Heart left ventricle (tissue), 16 donors: ENCODE measurements at regions of chr13 and their contacts with region 1.

Region 1: DNA sequence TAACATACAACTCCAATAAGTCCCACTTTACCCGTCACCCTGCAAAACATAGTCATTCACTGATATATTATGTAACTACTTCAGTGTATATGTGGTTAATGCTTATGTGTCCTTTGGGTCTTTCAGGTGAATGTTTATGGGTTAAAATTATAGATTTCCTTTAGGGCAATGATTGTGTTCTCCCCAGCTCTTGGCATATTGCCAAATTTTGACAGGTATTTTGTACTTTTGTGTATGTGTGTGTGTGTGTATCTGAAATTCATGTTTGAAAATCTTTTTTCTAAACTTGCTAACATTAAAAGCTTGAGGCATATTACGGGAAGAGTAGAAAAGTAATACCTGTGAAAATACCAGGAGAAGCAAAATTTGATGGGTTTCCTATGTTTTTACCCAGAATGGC is 8.2 kb downstream of the CDK8 start:
- DNase-seq: no peak
- ATAC-seq: no peak
- H3K4me3 ChIP-seq: no peak overlapping the region
- H3K27ac ChIP-seq: no peak overlapping the region
- H3K4me1 ChIP-seq: peaks cover 0 to 30% (median 12%) of the 10 kb centered on the region in 12 donors
- H3K27me3 ChIP-seq: no peaks in the 10 kb centered on the region
- CTCF ChIP-seq: no peak
- POLR2A ChIP-seq: no peak

Region 2: DNA sequence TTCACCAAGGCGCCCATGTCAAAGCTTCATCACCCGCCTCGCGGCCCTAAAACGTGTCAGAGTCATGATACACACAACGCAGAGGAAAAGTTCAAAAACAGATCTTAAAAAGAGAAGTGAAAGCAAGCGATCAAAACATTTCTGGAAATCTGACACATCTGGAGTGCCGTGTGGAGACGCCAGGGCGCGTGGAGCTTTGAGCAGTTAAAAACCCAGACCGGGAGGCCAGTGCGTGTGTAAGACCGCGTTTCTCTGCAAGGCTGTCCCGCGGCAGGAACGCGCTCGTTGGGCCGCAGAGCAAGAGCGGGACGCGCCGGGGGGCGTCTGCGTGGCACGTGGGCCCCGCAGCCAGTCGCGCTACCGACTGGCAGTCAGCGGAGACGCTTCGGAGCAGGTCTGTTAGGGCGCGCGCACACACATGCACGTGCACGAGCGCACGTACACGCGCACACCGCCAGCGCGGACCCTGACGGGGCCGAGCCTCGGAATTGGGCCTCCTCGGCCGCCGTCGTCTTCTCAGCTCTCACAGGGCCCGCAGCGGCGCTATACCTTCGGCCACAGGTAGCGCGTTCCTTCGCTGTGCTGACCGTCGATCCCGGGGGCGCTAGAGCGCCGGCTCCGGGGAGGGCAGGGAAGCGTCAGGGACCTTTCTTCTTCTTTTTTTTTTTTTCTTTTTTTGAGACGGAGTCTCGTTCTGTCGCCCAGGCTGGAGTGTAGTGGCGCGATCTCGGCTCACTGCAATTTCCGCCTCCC is 75.9 kb before region 1 on chr13:
- intact Hi-C with region 1: no loop called
- DNase-seq: peak; percentile 86 to 93 (median 89)
- ATAC-seq: peak; percentile 80 to 97 (median 96)
- H3K4me3 ChIP-seq: peak overlapping the region; percentile 6 to 77 (median 70)
- H3K27ac ChIP-seq: peak overlapping the region; percentile 35 to 94 (median 76)
- H3K4me1 ChIP-seq: peaks cover 0 to 22% (median 6%) of the 10 kb centered on the region in 12 donors
- H3K27me3 ChIP-seq: no peaks in the 10 kb centered on the region
- CTCF ChIP-seq: peak in 8 of 12 donors; percentile 7 to 50 (median 28)
- POLR2A ChIP-seq: peak in 1 of 2 donors; percentile 15

Region 3: GRCh38 chr13:26300140-26300539 is 38.0 kb after region 1 on chr13:
- intact Hi-C with region 1: no loop called
- DNase-seq: no peak
- ATAC-seq: peak in 1 of 4 donors; percentile 45
- H3K4me3 ChIP-seq: no peak overlapping the region
- H3K27ac ChIP-seq: no peak overlapping the region
- H3K4me1 ChIP-seq: peaks cover 0 to 55% (median 26%) of the 10 kb centered on the region in 12 donors
- H3K27me3 ChIP-seq: no peaks in the 10 kb centered on the region
- CTCF ChIP-seq: no peak
- POLR2A ChIP-seq: no peak

Region 4: GRCh38 chr13:26377038-26377437 is 114.9 kb after region 1 on chr13:
- intact Hi-C with region 1: loop called in 2 of 10 experiments (anchors 10 kb)
- DNase-seq: no peak
- ATAC-seq: peak in 1 of 4 donors; percentile 59
- H3K4me3 ChIP-seq: no peak overlapping the region
- H3K27ac ChIP-seq: no peak overlapping the region
- H3K4me1 ChIP-seq: peaks cover 0 to 13% (median 0%) of the 10 kb centered on the region in 12 donors
- H3K27me3 ChIP-seq: no peaks in the 10 kb centered on the region
- CTCF ChIP-seq: peak in 10 of 12 donors; percentile 6 to 43 (median 24)
- POLR2A ChIP-seq: no peak

Region 5: GRCh38 chr13:27593267-27593666 is 1331.1 kb after region 1 on chr13:
- intact Hi-C with region 1: no loop called
- DNase-seq: no peak
- ATAC-seq: no peak
- H3K4me3 ChIP-seq: no peak overlapping the region
- H3K27ac ChIP-seq: no peak overlapping the region
- H3K4me1 ChIP-seq: peaks cover 0 to 49% (median 17%) of the 10 kb centered on the region in 12 donors
- H3K27me3 ChIP-seq: no peaks in the 10 kb centered on the region
- CTCF ChIP-seq: no peak
- POLR2A ChIP-seq: no peak